Spleen (tissue), 13 donors: ENCODE measurements at regions of chr9 and their contacts with region 1.

Region 1: GRCh38 chr9:121059998-121060636 is 10.0 kb upstream of the C5 start:
- DNase-seq: no peak
- H3K4me3 ChIP-seq: no peak overlapping the region
- H3K27ac ChIP-seq: no peak overlapping the region
- H3K4me1 ChIP-seq: peaks cover 0 to 12% (median 4%) of the 10 kb centered on the region in 6 donors
- H3K27me3 ChIP-seq: no peaks in the 10 kb centered on the region
- CTCF ChIP-seq: peak; percentile 30 to 78 (median 68)
- POLR2A ChIP-seq: no peak

Region 2: GRCh38 chr9:120755827-120756434 is 304.2 kb before region 1 on chr9:
- intact Hi-C with region 1: loop called (anchors 5 kb)
- DNase-seq: no peak
- H3K4me3 ChIP-seq: no peak overlapping the region
- H3K27ac ChIP-seq: peak overlapping the region in 5 of 8 donors; percentile 56 to 79 (median 78)
- H3K4me1 ChIP-seq: peaks cover 14 to 50% (median 27%) of the 10 kb centered on the region in 6 donors
- H3K27me3 ChIP-seq: no peaks in the 10 kb centered on the region
- CTCF ChIP-seq: peak; percentile 82 to 97 (median 94)
- POLR2A ChIP-seq: no peak

Region 3: GRCh38 chr9:120989065-120989464 is 71.1 kb before region 1 on chr9:
- intact Hi-C with region 1: no loop called
- DNase-seq: no peak
- H3K4me3 ChIP-seq: no peak overlapping the region
- H3K27ac ChIP-seq: no peak overlapping the region
- H3K4me1 ChIP-seq: no peaks in the 10 kb centered on the region
- H3K27me3 ChIP-seq: no peaks in the 10 kb centered on the region
- CTCF ChIP-seq: no peak
- POLR2A ChIP-seq: no peak

Region 4: DNA sequence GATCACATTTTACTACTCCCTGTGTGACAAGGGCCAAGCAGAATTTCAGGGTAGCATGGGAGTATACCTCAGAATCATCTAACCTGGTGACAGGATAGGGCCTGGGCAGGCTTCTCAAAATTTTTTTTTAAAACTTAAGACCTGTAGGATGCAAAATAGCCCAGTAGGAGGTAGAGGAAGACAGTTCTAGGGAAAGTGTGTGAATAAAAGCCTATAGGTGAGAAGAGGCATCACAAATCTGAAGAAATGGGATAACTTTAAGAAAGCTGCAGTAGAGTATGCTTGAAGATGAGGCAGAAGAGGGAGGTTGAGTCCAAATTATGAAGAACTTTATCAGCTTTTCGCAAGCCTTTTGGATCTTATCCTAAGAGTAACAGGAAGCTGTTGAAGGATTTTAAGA is 46.9 kb after region 1 on chr9:
- intact Hi-C with region 1: no loop called
- DNase-seq: no peak
- H3K4me3 ChIP-seq: no peak overlapping the region
- H3K27ac ChIP-seq: peak overlapping the region in 1 of 8 donors; percentile 4
- H3K4me1 ChIP-seq: peaks cover 0 to 38% (median 12%) of the 10 kb centered on the region in 6 donors
- H3K27me3 ChIP-seq: no peaks in the 10 kb centered on the region
- CTCF ChIP-seq: peak in 2 of 11 experiments; percentile 8 to 13
- POLR2A ChIP-seq: no peak

Region 5: GRCh38 chr9:121138973-121139372 is 78.9 kb after region 1 on chr9:
- intact Hi-C with region 1: no loop called
- DNase-seq: no peak
- H3K4me3 ChIP-seq: no peak overlapping the region
- H3K27ac ChIP-seq: no peak overlapping the region
- H3K4me1 ChIP-seq: peaks cover 0 to 2% (median 0%) of the 10 kb centered on the region in 6 donors
- H3K27me3 ChIP-seq: no peaks in the 10 kb centered on the region
- CTCF ChIP-seq: no peak
- POLR2A ChIP-seq: no peak

Region 6: DNA sequence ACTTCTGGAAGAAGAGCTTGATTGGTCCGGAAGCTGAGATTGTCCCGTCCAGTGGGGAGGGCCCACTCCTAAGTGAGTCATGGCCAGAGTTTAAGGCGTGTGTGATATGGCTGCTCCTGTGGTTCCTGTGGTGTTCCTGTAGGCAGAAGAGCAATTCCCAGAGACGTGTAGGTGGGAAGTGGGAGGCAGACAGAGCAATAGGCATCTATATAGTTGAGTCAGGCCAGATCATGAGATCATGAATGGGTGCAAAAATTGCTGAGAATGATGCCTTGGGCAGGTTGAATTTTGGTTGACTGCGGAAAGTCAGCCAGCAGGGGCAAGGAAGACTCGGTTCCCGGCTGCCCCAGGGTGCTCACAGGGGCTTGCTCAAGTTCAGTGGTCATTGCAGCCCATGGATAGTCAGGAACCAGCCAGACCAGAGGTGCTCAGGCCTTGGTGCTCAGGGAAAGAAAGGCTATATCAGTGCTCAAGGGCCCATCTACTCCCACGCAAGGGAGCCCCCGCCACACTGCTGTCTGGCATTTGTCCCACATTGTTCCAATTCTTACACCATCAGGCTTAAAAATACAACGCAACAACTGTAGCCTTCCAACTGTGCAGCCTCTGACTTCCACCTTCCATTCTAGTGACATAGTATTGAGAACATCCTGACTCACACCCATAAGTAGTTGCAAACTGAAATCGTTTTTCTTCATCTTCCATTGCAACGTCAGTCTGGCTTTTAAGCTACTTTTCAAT is 186.9 kb after region 1 on chr9:
- intact Hi-C with region 1: no loop called
- DNase-seq: no peak
- H3K4me3 ChIP-seq: no peak overlapping the region
- H3K27ac ChIP-seq: no peak overlapping the region
- H3K4me1 ChIP-seq: peaks cover 0 to 18% (median 7%) of the 10 kb centered on the region in 6 donors
- H3K27me3 ChIP-seq: no peaks in the 10 kb centered on the region
- CTCF ChIP-seq: no peak
- POLR2A ChIP-seq: no peak